ENCODE measurements at regions of chr6 and their contacts with region 1.

Region 1: GRCh38 chr6:117602151-117602898 is at the start of gene GOPC:
- DNase-seq: peak; percentile 97 to 98
- H3K4me3 ChIP-seq: peak within 1 kb of the TSS; percentile 96 to 98
- H3K27ac ChIP-seq: peak within 1 kb of the TSS; percentile 89 to 91
- H3K4me1 ChIP-seq: peaks cover 0 to 31% (median 7%) of the 10 kb centered on the region in 4 donors
- H3K27me3 ChIP-seq: no peaks in the 10 kb centered on the region
- CTCF ChIP-seq: no peak

Region 2: GRCh38 chr6:117547688-117548621 is 54.4 kb before region 1 on chr6:
- intact Hi-C with region 1: loop called (anchors 5 kb)
- DNase-seq: peak; percentile 57 to 85
- H3K4me3 ChIP-seq: peak overlapping the region; percentile 48 to 54
- H3K27ac ChIP-seq: peak overlapping the region; percentile 51 to 67
- H3K4me1 ChIP-seq: peaks cover 0 to 10% (median 7%) of the 10 kb centered on the region in 4 donors
- H3K27me3 ChIP-seq: no peaks in the 10 kb centered on the region
- CTCF ChIP-seq: peak in 1 of 2 experiments; percentile 11